AG04450 (cell line): ENCODE measurements at regions of chr6 and their contacts with region 1.

Region 1: GRCh38 chr6:127554435-127555006 is 22.5 kb upstream of the C6orf58 start:
- DNase-seq: no peak
- H3K4me3 ChIP-seq: no peak overlapping the region
- H3K27ac ChIP-seq: no peak overlapping the region
- H3K27me3 ChIP-seq: no peaks in the 10 kb centered on the region
- CTCF ChIP-seq: peak; percentile 57

Region 2: GRCh38 chr6:126983779-126984178 is 570.7 kb before region 1 on chr6:
- CTCF ChIA-PET with region 1: no interaction called
- POLR2A ChIA-PET with region 1: no interaction called
- DNase-seq: no peak
- H3K4me3 ChIP-seq: no peak overlapping the region
- H3K27ac ChIP-seq: no peak overlapping the region
- H3K27me3 ChIP-seq: no peaks in the 10 kb centered on the region
- CTCF ChIP-seq: no peak

Region 3: DNA sequence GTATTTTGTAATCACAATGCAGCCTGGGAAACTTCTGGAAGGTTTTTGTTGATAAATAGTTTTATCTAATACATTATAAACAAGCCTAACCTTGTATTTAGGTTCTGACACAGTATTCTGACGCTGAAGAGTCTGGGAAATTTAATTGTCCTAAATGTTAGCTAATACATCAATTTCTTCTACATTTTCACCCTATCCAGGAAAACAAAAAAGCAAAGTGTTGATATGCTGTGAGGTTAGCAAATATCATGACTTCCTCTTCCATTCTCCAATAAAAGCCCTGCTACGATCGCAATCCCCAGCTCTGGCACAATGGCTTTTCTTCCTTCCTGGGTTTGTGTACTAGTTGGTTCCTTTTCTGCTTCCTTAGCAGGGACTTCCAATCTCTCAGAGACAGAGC is 22.4 kb after region 1 on chr6 and contains the start of gene C6orf58:
- CTCF ChIA-PET with region 1: no interaction called
- POLR2A ChIA-PET with region 1: no interaction called
- DNase-seq: no peak
- H3K4me3 ChIP-seq: no peak within 1 kb of the TSS
- H3K27ac ChIP-seq: no peak within 1 kb of the TSS
- H3K27me3 ChIP-seq: no peaks in the 10 kb centered on the region
- CTCF ChIP-seq: no peak
- polyA plus RNA-seq, gene C6orf58: 0.12 TPM in 1 of 2 replicates, not detected in the other

Region 4: GRCh38 chr6:127641905-127642304 is 87.4 kb after region 1 on chr6:
- CTCF ChIA-PET with region 1: interaction called, 14 read pairs
- POLR2A ChIA-PET with region 1: no interaction called
- DNase-seq: peak; percentile 3
- H3K4me3 ChIP-seq: no peak overlapping the region
- H3K27ac ChIP-seq: no peak overlapping the region
- H3K27me3 ChIP-seq: no peaks in the 10 kb centered on the region
- CTCF ChIP-seq: peak; percentile 81